Ascending aorta (tissue), 2 donors: ENCODE measurements at regions of chr4 and their contacts with region 1.

Region 1: GRCh38 chr4:6909073-6909965 is at the start of gene TBC1D14:
- DNase-seq: peak; percentile 54 to 93
- H3K4me3 ChIP-seq: peak within 1 kb of the TSS; percentile 84 to 94
- H3K27ac ChIP-seq: peak within 1 kb of the TSS; percentile 97 to 99
- H3K4me1 ChIP-seq: peaks cover 0 to 32% of the 10 kb centered on the region in 2 donors
- H3K27me3 ChIP-seq: no peaks in the 10 kb centered on the region
- CTCF ChIP-seq: peak in 1 of 3 experiments; percentile 4
- total RNA-seq, gene TBC1D14: 26.4 TPM

Region 2: DNA sequence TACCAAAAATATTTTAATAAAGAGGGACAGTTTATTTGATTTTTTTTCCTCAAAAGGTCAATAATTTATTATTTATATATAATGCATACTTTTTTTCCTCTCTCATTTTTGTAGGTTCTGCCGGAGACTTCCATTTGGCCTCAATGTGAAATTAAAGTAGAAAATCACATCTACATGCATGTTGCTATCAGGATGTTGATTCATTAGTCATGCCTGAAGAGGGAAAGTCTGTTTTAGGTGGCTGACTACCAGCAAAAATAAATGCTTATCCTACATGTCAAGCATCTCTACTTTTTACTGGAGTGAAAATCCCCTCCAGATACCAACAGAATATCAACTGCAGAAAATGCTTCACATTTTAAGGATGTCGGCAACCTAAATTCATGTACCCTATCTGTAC is 85.2 kb before region 1 on chr4:
- intact Hi-C with region 1: no loop called
- DNase-seq: no peak
- H3K4me3 ChIP-seq: no peak overlapping the region
- H3K27ac ChIP-seq: no peak overlapping the region
- H3K4me1 ChIP-seq: peaks cover 0 to 2% of the 10 kb centered on the region in 2 donors
- H3K27me3 ChIP-seq: no peaks in the 10 kb centered on the region
- CTCF ChIP-seq: no peak

Region 3: GRCh38 chr4:6885951-6886557 is 23.3 kb before region 1 on chr4:
- intact Hi-C with region 1: loop called (anchors 2 kb)
- DNase-seq: peak; percentile 50 to 87
- H3K4me3 ChIP-seq: peak overlapping the region in 1 of 2 donors; percentile 37
- H3K27ac ChIP-seq: peak overlapping the region; percentile 79 to 80
- H3K4me1 ChIP-seq: peaks cover 2 to 14% of the 10 kb centered on the region in 2 donors
- H3K27me3 ChIP-seq: no peaks in the 10 kb centered on the region
- CTCF ChIP-seq: peak in 1 of 3 experiments; percentile 33

Region 4: GRCh38 chr4:7649741-7650531 is 740.6 kb after region 1 on chr4:
- intact Hi-C with region 1: no loop called
- DNase-seq: peak; percentile 44 to 76
- H3K4me3 ChIP-seq: no peak overlapping the region
- H3K27ac ChIP-seq: no peak overlapping the region
- H3K4me1 ChIP-seq: no peaks in the 10 kb centered on the region
- H3K27me3 ChIP-seq: no peaks in the 10 kb centered on the region
- CTCF ChIP-seq: no peak